Mammary epithelial cell (primary cell): ENCODE measurements at regions of chr9 and their contacts with region 1.

Region 1: DNA sequence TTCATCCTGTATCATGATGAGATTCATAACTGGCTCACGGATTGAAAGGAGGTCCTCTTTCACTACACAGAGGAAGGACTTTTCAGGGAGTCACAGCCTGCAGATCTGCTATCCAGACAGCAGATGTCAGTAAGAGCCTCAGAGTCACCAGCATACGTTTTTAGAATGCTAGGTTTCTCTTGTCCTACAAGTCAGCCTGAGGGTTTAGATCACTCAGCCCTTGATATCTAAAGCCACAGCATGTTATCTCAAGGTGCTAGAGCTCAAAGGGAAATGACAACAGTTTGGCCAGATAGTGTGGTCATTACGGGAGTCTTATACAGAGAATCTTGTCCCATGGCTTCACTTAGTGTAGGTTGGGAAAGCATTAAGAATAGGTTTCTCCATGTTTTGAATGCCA is 30.9 kb upstream of the SLC46A2 start:
- DNase-seq: peak; percentile 52
- H3K4me3 ChIP-seq: no peak overlapping the region
- H3K27ac ChIP-seq: no peak overlapping the region
- H3K4me1 ChIP-seq: peaks cover 12% of the 10 kb centered on the region
- H3K27me3 ChIP-seq: no peaks in the 10 kb centered on the region
- CTCF ChIP-seq: peak; percentile 64 to 84

Region 2: DNA sequence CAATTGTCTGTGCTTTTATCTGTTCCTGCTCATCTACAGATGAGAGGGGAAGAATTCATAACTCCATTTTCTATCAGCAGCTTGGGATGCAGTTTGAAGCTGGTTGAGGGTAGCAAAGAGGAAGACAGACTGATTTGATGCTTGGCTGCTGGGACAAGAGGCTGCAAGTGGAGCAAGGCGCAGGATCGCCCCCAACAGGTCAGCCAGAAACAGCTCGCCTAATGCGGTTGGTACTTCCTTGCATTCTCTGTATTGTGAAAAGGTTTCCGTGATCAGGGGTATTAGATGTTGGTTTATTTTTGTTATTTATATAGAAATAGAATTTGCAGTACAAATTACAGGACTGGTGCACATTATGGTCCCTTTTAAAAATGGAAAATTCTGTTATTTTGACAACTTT is 49.9 kb after region 1 on chr9:
- CTCF ChIA-PET with region 1: no interaction called
- dilution Hi-C with region 1: no loop called
- in situ Hi-C with region 1: no loop called
- intact Hi-C with region 1: loop called (anchors 1 kb)
- DNase-seq: peak; percentile 11
- H3K4me3 ChIP-seq: no peak overlapping the region
- H3K27ac ChIP-seq: no peak overlapping the region
- H3K4me1 ChIP-seq: no peaks in the 10 kb centered on the region
- H3K27me3 ChIP-seq: no peaks in the 10 kb centered on the region
- CTCF ChIP-seq: peak; percentile 38 to 59

Region 3: DNA sequence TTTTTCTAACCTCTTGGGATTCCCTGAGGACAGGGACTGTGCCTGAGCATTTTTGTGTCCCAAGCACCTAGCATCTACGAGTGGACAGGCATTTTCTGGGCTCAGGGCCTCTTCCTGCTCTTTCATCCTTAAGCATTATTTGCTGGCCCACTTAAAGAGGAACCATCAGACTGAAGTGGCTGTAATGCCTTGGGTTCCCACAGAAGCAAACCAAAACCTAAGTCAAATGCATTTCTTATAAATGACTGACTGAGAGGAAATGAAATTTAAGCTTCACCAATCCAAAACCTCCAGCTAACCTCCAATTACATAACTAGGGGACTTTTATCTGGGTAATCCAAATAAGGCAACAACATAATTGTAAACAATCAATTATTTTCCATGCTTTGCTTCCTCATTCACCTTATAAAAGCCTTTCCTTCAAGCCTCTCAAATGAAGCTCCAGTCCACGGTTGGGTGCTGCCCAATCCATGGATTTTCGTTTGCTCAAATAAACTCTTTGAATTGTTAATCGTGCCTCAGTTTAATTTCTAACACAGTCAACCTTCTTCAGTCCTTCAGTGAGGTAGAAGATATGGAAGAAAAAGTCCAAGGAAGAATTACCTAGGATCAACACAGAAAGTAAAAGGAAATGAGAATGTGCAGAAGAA is 204.0 kb after region 1 on chr9:
- CTCF ChIA-PET with region 1: no interaction called
- dilution Hi-C with region 1: no loop called
- in situ Hi-C with region 1: loop called in 1 of 2 experiments (anchors 25 kb)
- intact Hi-C with region 1: no loop called
- DNase-seq: no peak
- H3K4me3 ChIP-seq: no peak overlapping the region
- H3K27ac ChIP-seq: no peak overlapping the region
- H3K4me1 ChIP-seq: no peaks in the 10 kb centered on the region
- H3K27me3 ChIP-seq: peaks cover 2% of the 10 kb centered on the region
- CTCF ChIP-seq: no peak